ENCODE measurements at regions of chr11 and their contacts with region 1.

Region 1: GRCh38 chr11:61816736-61817455 is at the start of gene FADS1:
- DNase-seq: peak; percentile 98 to 99
- H3K4me3 ChIP-seq: peak within 1 kb of the TSS; percentile 85
- H3K4me3 Mint-ChIP-seq: peak within 1 kb of the TSS; percentile 81
- H3K27ac Mint-ChIP-seq: peak within 1 kb of the TSS; percentile 90
- H3K4me1 ChIP-seq: peaks cover 16% of the 10 kb centered on the region
- H3K4me1 Mint-ChIP-seq: peaks cover 18% of the 10 kb centered on the region
- H3K27me3 ChIP-seq: no peaks in the 10 kb centered on the region
- H3K27me3 Mint-ChIP-seq: no peaks in the 10 kb centered on the region
- CTCF ChIP-seq: peak; percentile 72 to 95
- total RNA-seq, gene FADS1: 108 and 116 TPM in 2 replicates

Region 2: GRCh38 chr11:61711498-61711897 is 105.4 kb before region 1 on chr11:
- CTCF ChIA-PET with region 1: no interaction called
- POLR2A ChIA-PET with region 1: no interaction called
- intact Hi-C with region 1: no loop called
- DNase-seq: no peak
- H3K4me3 ChIP-seq: no peak overlapping the region
- H3K4me3 Mint-ChIP-seq: no peak overlapping the region
- H3K27ac Mint-ChIP-seq: no peak overlapping the region
- H3K4me1 ChIP-seq: peaks cover 9% of the 10 kb centered on the region
- H3K4me1 Mint-ChIP-seq: peaks cover 10% of the 10 kb centered on the region
- H3K27me3 ChIP-seq: no peaks in the 10 kb centered on the region
- H3K27me3 Mint-ChIP-seq: no peaks in the 10 kb centered on the region
- CTCF ChIP-seq: no peak

Region 3: GRCh38 chr11:61862714-61863547 is 46.0 kb after region 1 on chr11:
- CTCF ChIA-PET with region 1: no interaction called
- POLR2A ChIA-PET with region 1: no interaction called
- intact Hi-C with region 1: no loop called
- DNase-seq: no peak
- H3K4me3 ChIP-seq: no peak overlapping the region
- H3K4me3 Mint-ChIP-seq: no peak overlapping the region
- H3K27ac Mint-ChIP-seq: no peak overlapping the region
- H3K4me1 ChIP-seq: peaks cover 7% of the 10 kb centered on the region; the same call in 1 of the 2 replicates
- H3K4me1 Mint-ChIP-seq: no peaks in the 10 kb centered on the region
- H3K27me3 ChIP-seq: no peaks in the 10 kb centered on the region
- H3K27me3 Mint-ChIP-seq: no peaks in the 10 kb centered on the region
- CTCF ChIP-seq: no peak

Region 4: DNA sequence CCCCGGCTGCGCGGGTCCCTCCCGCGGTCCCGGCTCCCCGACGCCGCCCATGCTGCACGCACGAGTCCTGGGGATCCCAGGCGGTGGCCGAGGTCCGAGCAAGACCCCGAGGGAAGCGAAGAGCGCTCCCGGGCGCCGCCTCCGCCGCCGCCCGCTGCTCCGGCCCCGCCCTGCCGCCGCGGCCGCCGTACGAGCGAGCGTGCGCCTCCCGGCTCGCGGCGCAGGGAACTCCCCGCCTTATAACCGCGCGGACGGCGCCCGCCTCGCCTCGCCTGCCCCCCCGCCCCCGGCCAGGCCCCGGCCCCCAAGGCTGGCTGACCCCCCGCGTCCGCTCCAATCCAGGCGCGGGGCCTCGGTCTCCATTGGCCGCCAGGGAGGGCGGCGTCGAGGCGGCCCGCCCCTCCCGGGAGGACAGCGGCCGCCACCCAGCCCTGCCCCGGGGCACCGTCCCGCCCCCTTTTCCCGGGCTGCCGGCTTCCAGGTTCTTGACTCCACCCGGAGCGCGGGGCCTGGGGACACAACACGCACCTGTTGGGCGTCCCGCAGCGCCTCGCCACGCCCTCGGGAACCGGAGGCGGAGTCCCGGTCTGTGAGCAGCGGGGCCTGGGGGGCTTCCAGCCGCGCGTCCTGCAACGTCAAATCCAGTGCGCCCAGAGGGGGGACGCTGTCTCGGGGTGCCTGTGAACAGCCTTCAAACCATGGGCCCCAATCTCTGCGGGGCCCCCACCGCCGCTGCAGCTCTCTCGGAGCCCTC is 74.6 kb after region 1 on chr11 and contains the start of gene FADS3:
- CTCF ChIA-PET with region 1: interaction called, 4 read pairs
- POLR2A ChIA-PET with region 1: no interaction called
- intact Hi-C with region 1: loop called (anchors 1 kb)
- DNase-seq: peak; percentile 92 to 96
- H3K4me3 ChIP-seq: peak within 1 kb of the TSS; percentile 90
- H3K4me3 Mint-ChIP-seq: peak within 1 kb of the TSS; percentile 91
- H3K27ac Mint-ChIP-seq: peak within 1 kb of the TSS; percentile 64
- H3K4me1 ChIP-seq: peaks cover 8% of the 10 kb centered on the region
- H3K4me1 Mint-ChIP-seq: no peaks in the 10 kb centered on the region
- H3K27me3 ChIP-seq: no peaks in the 10 kb centered on the region
- H3K27me3 Mint-ChIP-seq: no peaks in the 10 kb centered on the region
- CTCF ChIP-seq: peak in 1 of 2 experiments; percentile 32
- total RNA-seq, gene FADS3: 26.1 and 32.7 TPM in 2 replicates

Region 5: DNA sequence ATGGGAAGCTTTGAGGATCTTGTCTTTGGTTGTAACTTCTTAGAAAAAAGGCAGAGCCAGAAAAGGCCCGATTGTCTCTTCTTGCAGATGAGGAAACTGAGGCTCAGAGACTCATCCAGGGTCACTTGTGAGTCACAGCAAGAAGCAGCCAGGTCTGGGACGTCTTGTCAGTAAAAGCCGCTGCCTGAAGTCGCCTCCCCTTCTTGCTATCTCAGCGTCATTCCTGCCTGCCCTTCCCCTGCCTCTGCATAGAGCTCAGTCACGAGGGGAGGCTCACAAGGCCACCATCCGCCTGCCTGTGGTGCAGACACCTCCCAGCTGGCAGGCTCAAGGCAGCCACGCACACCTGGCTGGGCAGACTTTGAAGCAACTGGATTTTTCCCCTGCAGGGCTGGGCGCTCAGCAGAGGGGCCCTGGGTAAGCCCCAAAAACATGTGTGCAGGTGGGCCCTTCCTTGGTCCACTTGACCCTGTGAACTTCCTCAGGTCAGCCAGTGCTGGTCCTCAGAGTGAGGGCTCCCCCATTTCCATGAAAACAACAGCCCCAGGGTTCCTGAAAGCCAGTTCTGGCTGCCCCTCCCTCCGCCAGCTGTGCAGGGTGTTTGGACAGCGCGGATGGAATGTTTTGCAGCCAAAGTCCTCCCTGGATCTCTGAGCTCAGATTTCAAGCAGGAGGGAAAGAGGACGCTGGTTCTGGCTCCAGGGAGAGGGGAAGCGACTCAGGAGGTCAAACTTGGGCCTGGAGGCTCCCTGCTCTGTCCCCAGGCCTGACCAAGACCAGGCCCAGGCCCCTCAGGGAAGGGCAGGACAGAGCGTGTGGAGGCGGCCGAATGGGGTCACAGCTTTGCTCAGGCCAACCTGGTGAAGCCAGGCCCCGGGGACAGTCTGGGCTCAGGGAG is 106.5 kb after region 1 on chr11:
- CTCF ChIA-PET with region 1: no interaction called
- POLR2A ChIA-PET with region 1: interaction called, 19 read pairs
- intact Hi-C with region 1: no loop called
- DNase-seq: peak; percentile 89 to 92
- H3K4me3 ChIP-seq: no peak overlapping the region
- H3K4me3 Mint-ChIP-seq: peak overlapping the region; percentile 68
- H3K27ac Mint-ChIP-seq: peak overlapping the region; percentile 98
- H3K4me1 ChIP-seq: peaks cover 48% of the 10 kb centered on the region
- H3K4me1 Mint-ChIP-seq: peaks cover 49% of the 10 kb centered on the region
- H3K27me3 ChIP-seq: no peaks in the 10 kb centered on the region
- H3K27me3 Mint-ChIP-seq: no peaks in the 10 kb centered on the region
- CTCF ChIP-seq: no peak

Measured in Caco-2 (cell line).